ENCODE measurements at regions of chr10 and their contacts with region 1.

Region 1: GRCh38 chr10:75235375-75236177 is at the start of gene COMTD1:
- DNase-seq: peak; percentile 98
- total RNA-seq, gene COMTD1: 29.2 TPM

Region 2: GRCh38 chr10:74262856-74263255 is 972.7 kb before region 1 on chr10:
- intact Hi-C with region 1: loop called (anchors 5 kb)
- DNase-seq: no peak

Region 3: DNA sequence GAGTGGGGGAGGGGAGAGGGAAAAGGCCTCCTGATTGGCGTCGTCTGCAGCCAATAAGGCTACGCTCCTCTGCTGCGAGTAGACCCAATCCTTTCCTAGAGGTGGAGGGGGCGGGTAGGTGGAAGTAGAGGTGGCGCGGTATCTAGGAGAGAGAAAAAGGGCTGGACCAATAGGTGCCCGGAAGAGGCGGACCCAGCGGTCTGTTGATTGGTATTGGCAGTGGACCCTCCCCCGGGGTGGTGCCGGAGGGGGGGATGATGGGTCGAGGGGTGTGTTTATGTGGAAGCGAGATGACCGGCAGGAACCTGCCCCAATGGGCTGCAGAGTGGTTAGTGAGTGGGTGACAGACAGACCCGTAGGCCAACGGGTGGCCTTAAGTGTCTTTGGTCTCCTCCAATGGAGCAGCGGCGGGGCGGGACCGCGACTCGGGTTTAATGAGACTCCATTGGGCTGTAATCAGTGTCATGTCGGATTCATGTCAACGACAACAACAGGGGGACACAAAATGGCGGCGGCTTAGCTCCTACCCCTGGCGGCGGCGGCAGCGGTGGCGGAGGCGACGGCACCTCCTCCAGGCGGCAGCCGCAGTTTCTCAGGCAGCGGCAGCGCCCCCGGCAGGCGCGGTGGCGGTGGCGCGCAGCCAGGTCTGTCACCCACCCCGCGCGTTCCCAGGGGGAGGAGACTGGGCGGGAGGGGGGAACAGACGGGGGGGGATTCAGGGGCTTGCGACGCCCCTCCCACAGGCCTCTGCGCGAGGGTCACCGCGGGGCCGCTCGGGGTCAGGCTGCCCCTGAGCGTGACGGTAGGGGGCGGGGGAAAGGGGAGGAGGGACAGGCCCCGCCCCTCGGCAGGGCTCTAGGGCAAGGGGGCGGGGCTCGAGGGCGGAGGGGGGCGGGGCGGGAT is 409.2 kb before region 1 on chr10 and contains the start of gene KAT6B:
- intact Hi-C with region 1: loop called (anchors 10 kb)
- DNase-seq: peak; percentile 100
- total RNA-seq, gene KAT6B: 47.5 TPM

Region 4: GRCh38 chr10:75099952-75100763 is 135.4 kb before region 1 on chr10:
- intact Hi-C with region 1: loop called (anchors 5 kb)
- DNase-seq: peak; percentile 91

Region 5: DNA sequence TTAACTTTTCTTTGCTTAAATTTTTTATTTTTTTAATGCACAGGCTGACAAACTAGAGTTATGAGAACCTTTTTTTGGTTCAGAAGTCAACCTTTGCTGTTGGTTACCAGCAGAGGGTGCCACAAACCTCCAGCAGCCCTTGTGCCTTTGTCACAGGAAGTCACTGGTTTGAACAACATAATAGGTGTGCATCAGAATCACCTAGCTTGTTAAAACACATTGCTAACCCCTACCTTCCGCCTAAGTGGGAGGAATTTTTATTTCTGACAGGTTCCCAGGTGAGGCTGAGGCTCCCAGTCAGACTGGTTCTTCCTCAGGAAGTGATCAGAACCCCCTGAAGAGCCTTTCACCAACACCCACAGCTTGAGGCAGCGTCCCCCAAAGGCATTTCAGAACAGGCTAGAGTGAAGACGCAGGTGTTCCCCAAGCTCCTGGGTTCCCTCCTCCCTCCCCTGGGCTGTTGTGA is 47.6 kb before region 1 on chr10:
- intact Hi-C with region 1: loop called (anchors 2 kb)
- DNase-seq: peak; percentile 65